Ovary (tissue), 10 donors: ENCODE measurements at regions of chr11 and their contacts with region 1.

Region 1: DNA sequence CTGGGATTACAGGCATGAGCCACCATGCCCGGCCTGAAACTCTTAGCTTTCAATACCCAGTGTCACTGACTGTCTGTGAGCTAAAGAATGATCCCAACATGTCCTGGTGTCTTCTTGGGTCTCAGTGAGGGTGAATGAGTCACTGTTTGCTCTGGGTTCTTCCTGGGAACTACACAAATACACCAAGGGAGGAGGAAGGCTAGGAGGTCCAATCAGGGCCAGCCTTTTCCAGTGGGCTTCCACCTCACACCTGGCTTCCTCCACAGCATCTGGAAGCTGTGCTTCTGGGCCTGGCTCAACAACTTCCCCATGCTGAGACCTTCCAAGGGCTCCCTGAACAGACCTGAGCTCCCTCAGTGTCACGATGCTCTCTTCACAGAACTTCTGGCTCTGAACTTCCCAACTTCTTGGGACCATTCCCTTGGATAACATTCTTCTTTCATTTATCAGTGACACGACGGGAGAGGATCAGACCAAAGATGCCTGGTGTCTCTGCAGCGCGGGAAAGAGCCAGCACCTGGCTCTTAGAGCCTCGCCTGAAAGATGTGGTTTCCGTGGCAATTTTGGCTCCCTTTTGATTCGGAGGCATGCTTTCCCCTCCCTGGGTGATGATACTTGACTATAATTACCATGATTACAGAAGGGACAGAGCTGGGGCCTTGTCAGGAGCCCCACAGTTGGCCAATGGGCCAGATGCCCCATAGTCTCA is 22.3 kb upstream of the CHRM4 start:
- DNase-seq: no peak
- H3K4me3 ChIP-seq: no peak overlapping the region
- H3K27ac ChIP-seq: no peak overlapping the region
- H3K4me1 ChIP-seq: no peaks in the 10 kb centered on the region
- H3K27me3 ChIP-seq: no peaks in the 10 kb centered on the region
- CTCF ChIP-seq: no peak
- EP300 ChIP-seq: no peak
- POLR2A ChIP-seq: no peak

Region 2: GRCh38 chr11:46472670-46472994 is 58.7 kb after region 1 on chr11:
- intact Hi-C with region 1: loop called in 1 of 4 experiments (anchors 2 kb)
- DNase-seq: no peak
- H3K4me3 ChIP-seq: no peak overlapping the region
- H3K27ac ChIP-seq: no peak overlapping the region
- H3K4me1 ChIP-seq: no peaks in the 10 kb centered on the region
- H3K27me3 ChIP-seq: no peaks in the 10 kb centered on the region
- CTCF ChIP-seq: no peak
- EP300 ChIP-seq: no peak
- POLR2A ChIP-seq: no peak

Region 3: GRCh38 chr11:47259178-47259977 is 845.5 kb after region 1 on chr11:
- intact Hi-C with region 1: no loop called
- DNase-seq: no peak
- H3K4me3 ChIP-seq: no peak overlapping the region
- H3K27ac ChIP-seq: no peak overlapping the region
- H3K4me1 ChIP-seq: peaks cover 10% of the 10 kb centered on the region
- H3K27me3 ChIP-seq: no peaks in the 10 kb centered on the region
- CTCF ChIP-seq: no peak
- EP300 ChIP-seq: no peak
- POLR2A ChIP-seq: no peak